ENCODE measurements at regions of chr16 and their contacts with region 1.

Region 1: DNA sequence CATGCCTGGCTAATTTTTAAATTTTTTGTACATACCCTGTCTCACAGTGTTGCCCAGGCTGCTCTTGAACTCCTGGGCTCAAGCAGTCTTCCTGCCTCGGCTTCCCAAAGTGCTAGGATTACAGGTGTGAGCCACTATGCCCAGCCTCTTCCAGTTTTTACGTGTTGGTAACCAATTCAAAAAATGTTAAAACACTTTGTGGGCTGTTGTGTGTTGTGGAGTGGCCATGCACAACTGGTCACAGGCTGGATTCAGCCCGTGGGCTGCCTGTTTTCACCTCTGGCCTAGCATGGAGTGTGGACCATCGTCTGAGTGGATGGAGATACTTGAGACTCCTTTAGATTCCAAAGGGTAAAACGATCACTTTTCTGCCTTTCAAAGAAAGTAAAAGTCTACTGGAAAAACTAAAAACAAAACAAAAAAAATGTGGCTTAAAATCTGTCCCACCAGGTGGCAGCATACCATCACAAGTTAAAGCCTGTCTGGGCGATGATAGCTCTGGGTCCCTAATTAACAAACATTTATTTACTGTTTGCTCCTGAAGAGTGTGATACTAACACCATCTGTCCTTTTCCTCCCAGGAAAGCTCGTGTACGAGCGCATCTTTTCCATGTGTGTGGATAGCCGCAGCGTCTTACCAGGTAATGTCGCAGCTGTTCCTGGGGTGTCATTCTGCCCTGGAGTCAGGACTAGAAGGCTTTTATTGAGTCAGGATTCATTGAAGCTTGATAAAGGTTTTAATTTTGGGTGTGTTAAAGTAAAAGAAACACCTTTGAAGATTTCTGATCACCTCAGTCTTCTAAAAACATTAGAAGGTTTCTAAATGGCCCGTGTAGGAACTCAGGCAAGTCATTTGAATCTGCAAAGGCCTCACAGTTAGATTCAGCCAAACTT is 45.8 kb downstream of the VPS35L start:
- DNase-seq: peak; percentile 60
- H3K4me3 ChIP-seq: no peak overlapping the region
- H3K27ac ChIP-seq: no peak overlapping the region
- H3K4me1 ChIP-seq: peaks cover 5% of the 10 kb centered on the region
- H3K27me3 ChIP-seq: no peaks in the 10 kb centered on the region
- CTCF ChIP-seq: peak; percentile 41 to 49
- POLR2A ChIP-seq: no peak

Region 2: DNA sequence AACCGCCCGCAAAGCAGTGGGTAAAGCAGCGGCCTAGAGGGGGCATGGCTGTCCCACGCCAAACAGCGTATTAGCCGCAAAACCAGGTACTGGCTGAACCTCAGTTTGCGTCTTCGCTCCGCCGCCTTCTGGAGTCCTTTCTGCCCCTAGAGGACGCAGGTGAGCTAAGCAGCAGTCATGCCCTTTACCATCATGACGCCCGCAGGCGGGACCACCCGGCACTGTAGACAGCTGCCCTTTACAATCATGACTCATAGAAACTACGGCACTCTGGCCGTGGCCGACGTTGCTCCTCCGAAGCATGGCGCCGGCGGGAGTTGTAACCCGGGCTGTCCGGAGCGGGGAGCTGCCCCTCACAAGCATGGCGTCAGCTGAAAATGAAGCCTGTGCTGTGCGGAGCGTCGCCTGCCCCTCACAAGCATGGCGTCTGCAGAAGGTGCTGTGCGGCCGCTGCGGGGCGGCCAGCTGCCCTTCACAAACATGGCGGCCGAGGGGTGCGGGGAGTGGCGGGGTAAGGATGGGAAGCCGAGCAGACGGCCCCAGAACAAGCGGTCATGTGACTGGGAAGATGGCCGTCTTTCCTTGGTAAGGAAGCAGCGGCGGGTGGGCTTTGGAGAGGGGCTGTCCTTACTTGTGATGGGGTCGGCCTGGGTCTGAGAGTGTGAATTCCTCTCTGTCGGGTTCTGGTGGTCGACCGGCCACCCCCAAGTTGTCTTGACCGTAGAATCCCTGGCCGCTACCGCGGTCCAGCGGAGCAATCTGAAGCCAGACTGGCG is 46.0 kb before region 1 on chr16 and contains the start of gene VPS35L:
- CTCF ChIA-PET with region 1: interaction called, 5 read pairs
- POLR2A ChIA-PET with region 1: no interaction called
- dilution Hi-C with region 1: no loop called
- intact Hi-C with region 1: loop called (anchors 2 kb)
- DNase-seq: peak; percentile 100
- H3K4me3 ChIP-seq: peak within 1 kb of the TSS; percentile 67 to 77 (median 68)
- H3K27ac ChIP-seq: peak within 1 kb of the TSS; percentile 85
- H3K4me1 ChIP-seq: peaks cover 6% of the 10 kb centered on the region
- H3K27me3 ChIP-seq: no peaks in the 10 kb centered on the region
- CTCF ChIP-seq: peak; percentile 60 to 88
- POLR2A ChIP-seq: peak; percentile 90
- total RNA-seq, gene VPS35L: 80.2 and 91.1 TPM in 2 replicates

Region 3: DNA sequence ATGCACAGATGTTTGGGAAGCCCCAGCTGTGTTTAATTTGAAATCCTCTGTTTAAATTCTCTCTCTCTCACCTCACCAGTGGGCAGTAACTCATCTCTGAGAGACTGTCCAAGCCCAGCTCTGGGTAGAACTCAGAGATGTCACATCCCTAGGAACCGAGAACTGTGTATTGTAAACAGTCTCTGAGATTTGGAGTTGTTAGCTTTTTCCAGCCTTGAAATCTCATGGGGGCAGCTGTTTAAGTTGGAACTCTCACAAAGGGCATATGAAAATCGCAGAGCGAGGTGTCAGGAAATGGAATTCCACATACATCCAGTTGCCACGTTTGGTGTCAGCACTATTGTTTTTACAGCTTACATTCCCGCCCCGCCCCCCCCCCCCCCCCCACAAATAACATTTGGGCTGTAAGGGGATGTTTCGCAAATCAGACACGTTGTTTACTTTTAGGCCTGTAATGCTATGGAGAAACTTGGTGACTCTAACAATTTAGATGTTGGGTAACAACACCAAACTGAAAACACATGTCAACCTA is 11.5 kb before region 1 on chr16:
- CTCF ChIA-PET with region 1: interaction called, 11 read pairs
- POLR2A ChIA-PET with region 1: no interaction called
- dilution Hi-C with region 1: no loop called
- intact Hi-C with region 1: no loop called
- DNase-seq: peak; percentile 97
- H3K4me3 ChIP-seq: no peak overlapping the region
- H3K27ac ChIP-seq: peak overlapping the region; percentile 73
- H3K4me1 ChIP-seq: peaks cover 17% of the 10 kb centered on the region
- H3K27me3 ChIP-seq: no peaks in the 10 kb centered on the region
- CTCF ChIP-seq: no peak
- POLR2A ChIP-seq: no peak

Region 4: GRCh38 chr16:19696328-19696727 is 95.0 kb after region 1 on chr16:
- CTCF ChIA-PET with region 1: interaction called, 11 read pairs
- POLR2A ChIA-PET with region 1: no interaction called
- dilution Hi-C with region 1: no loop called
- intact Hi-C with region 1: loop called (anchors 10 kb)
- DNase-seq: peak; percentile 94
- H3K4me3 ChIP-seq: no peak overlapping the region
- H3K27ac ChIP-seq: peak overlapping the region; percentile 59
- H3K4me1 ChIP-seq: peaks cover 17% of the 10 kb centered on the region
- H3K27me3 ChIP-seq: no peaks in the 10 kb centered on the region
- CTCF ChIP-seq: no peak
- POLR2A ChIP-seq: no peak

Region 5: GRCh38 chr16:19876501-19877059 is 275.2 kb after region 1 on chr16:
- CTCF ChIA-PET with region 1: interaction called, 10 read pairs
- POLR2A ChIA-PET with region 1: interaction called, 4 read pairs
- dilution Hi-C with region 1: no loop called
- intact Hi-C with region 1: no loop called
- DNase-seq: no peak
- H3K4me3 ChIP-seq: no peak overlapping the region
- H3K27ac ChIP-seq: no peak overlapping the region
- H3K4me1 ChIP-seq: no peaks in the 10 kb centered on the region
- H3K27me3 ChIP-seq: no peaks in the 10 kb centered on the region
- CTCF ChIP-seq: no peak
- POLR2A ChIP-seq: no peak

Region 6: GRCh38 chr16:19907161-19907992 is 306.0 kb after region 1 on chr16:
- CTCF ChIA-PET with region 1: interaction called, 27 read pairs
- POLR2A ChIA-PET with region 1: no interaction called
- dilution Hi-C with region 1: no loop called
- intact Hi-C with region 1: no loop called
- DNase-seq: peak; percentile 73
- H3K4me3 ChIP-seq: no peak overlapping the region
- H3K27ac ChIP-seq: no peak overlapping the region
- H3K4me1 ChIP-seq: no peaks in the 10 kb centered on the region
- H3K27me3 ChIP-seq: no peaks in the 10 kb centered on the region
- CTCF ChIP-seq: peak; percentile 97 to 100
- POLR2A ChIP-seq: no peak